ENCODE measurements at regions of chr18 and their contacts with region 1.

Region 1: GRCh38 chr18:39994498-39994897 is 1960.5 kb upstream of the PIK3C3 start:
- DNase-seq: no peak
- H3K4me3 ChIP-seq: no peak overlapping the region
- H3K27ac ChIP-seq: no peak overlapping the region
- H3K4me1 ChIP-seq: no peaks in the 10 kb centered on the region
- H3K27me3 ChIP-seq: no peaks in the 10 kb centered on the region
- CTCF ChIP-seq: no peak
- POLR2A ChIP-seq: no peak

Region 2: GRCh38 chr18:38250981-38251380 is 1743.5 kb before region 1 on chr18:
- intact Hi-C with region 1: loop called (anchors 5 kb)
- DNase-seq: no peak
- H3K4me3 ChIP-seq: no peak overlapping the region
- H3K27ac ChIP-seq: no peak overlapping the region
- H3K4me1 ChIP-seq: no peaks in the 10 kb centered on the region
- H3K27me3 ChIP-seq: no peaks in the 10 kb centered on the region
- CTCF ChIP-seq: no peak
- POLR2A ChIP-seq: no peak

Region 3: DNA sequence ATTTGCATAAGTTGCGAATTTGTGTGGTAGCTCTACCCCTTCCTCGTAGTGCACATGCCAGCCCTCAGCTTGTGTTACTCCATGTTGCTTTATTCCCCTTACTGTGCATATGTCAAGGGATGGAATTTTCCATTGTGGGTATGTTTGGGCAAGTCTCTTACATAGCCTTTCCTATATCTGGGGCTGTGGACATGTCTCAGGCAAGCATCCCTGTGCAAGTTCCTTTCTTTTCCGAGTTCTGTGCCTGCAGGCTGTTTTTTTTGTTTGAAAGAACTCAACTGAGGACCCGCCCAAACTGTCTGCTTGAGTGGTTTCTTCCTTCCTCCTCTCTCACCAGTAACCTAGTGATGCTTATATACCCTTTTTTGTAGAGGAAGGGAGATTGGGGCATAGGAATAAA is 221.5 kb after region 1 on chr18:
- intact Hi-C with region 1: loop called (anchors 5 kb)
- DNase-seq: no peak
- H3K4me3 ChIP-seq: no peak overlapping the region
- H3K27ac ChIP-seq: no peak overlapping the region
- H3K4me1 ChIP-seq: no peaks in the 10 kb centered on the region
- H3K27me3 ChIP-seq: no peaks in the 10 kb centered on the region
- CTCF ChIP-seq: no peak
- POLR2A ChIP-seq: no peak

Measured in breast epithelium (tissue), 4 donors.